HEK293 (cell line): ENCODE measurements at regions of chr17 and their contacts with region 1.

Region 1: GRCh38 chr17:40417609-40418427 is at the start of gene TOP2A:
- H3K4me3 ChIP-seq: peak within 1 kb of the TSS; percentile 96
- H3K27ac ChIP-seq: peak within 1 kb of the TSS; percentile 94
- H3K4me1 ChIP-seq: peaks cover 3% of the 10 kb centered on the region
- CTCF ChIP-seq: 0 out of 2 replicates have a peak, but pooled peaks have one; percentile 5

Region 2: DNA sequence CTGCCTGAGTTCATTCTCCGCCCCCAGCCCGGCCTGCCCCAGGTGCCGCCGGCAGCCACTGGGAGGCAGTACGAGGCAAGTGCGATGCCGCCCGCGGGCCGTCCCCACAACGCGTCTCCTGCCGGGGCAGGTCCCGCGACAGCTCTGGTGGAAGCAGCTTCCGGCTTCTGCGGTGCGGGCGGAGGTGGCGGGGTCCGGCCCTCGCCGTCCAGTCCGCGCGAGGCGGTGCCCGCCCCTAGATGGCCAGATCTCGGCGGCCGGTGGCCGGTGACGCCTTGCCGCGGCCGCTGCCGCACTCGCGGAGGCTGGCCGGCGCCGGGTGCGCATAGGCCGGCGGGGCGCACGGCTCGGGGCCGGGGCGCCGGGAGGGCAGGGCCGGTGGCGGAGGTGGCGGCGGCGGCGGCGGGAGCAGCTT is 55.1 kb before region 1 on chr17:
- CTCF ChIA-PET with region 1: interaction called, 4 read pairs
- POLR2A ChIA-PET with region 1: interaction called, 18 read pairs
- H3K4me3 ChIP-seq: peak overlapping the region; percentile 50
- H3K27ac ChIP-seq: peak overlapping the region; percentile 70; the same call in 1 of the 2 replicates
- H3K4me1 ChIP-seq: no peaks in the 10 kb centered on the region
- CTCF ChIP-seq: peak; percentile 97

Region 3: DNA sequence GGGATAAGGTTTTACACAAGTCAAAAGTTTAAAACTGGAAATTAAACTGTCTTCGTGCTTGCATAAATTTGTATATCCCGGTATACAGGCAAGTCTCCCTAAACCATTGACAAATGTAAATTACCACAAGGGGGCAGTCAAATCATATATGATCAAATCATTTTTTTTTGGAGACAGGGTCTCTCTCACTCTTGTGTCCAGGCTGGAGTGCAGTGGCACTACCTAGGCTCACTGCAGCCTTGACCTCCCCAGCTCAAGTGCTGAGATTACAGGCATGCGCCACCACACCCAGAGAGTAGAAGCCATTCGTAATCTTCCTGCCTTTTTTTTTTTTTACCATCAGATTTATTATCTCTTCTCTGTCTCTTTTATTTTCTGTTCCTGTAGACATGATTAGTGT is 18.6 kb before region 1 on chr17:
- CTCF ChIA-PET with region 1: interaction called, 13 read pairs
- POLR2A ChIA-PET with region 1: interaction called, 11 read pairs
- H3K4me3 ChIP-seq: no peak overlapping the region
- H3K27ac ChIP-seq: no peak overlapping the region
- H3K4me1 ChIP-seq: no peaks in the 10 kb centered on the region
- CTCF ChIP-seq: no peak

Region 4: GRCh38 chr17:40443583-40444327 is 25.9 kb after region 1 on chr17:
- CTCF ChIA-PET with region 1: interaction called, 7 read pairs
- POLR2A ChIA-PET with region 1: interaction called, 13 read pairs
- H3K4me3 ChIP-seq: peak overlapping the region; percentile 16
- H3K27ac ChIP-seq: peak overlapping the region; percentile 46; the same call in 1 of the 2 replicates
- H3K4me1 ChIP-seq: no peaks in the 10 kb centered on the region; the same call in 1 of the 2 replicates
- CTCF ChIP-seq: peak; percentile 76

Region 5: DNA sequence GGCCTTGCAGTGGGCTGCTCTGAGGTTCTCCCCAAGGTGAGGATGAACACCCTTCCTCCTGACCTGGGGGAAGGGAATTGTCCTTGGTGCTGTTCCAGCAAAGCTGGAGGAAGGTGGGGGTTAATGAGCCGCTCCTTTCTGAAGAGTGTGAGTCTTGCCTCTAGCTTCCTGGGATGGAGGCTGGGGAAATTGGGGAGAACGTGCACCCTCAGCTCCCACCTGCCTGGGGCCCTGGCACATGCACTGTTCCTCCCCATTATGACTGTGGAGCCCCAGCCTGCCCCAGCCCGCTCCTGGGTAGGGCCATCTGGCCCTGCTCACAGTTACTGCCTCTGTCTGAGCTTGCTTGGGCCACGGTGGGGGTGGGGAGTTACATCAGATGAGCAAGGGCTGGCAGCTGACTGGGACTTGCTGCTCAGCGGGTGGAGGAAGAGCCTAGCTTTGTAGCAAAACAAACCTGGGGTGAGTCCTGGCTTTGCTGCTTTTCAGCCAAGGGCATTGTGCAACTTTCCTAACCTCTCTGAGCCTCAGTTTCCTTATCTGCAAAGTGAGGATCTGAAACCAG is 72.6 kb after region 1 on chr17:
- CTCF ChIA-PET with region 1: interaction called, 4 read pairs
- POLR2A ChIA-PET with region 1: interaction called, 10 read pairs
- H3K4me3 ChIP-seq: no peak overlapping the region
- H3K27ac ChIP-seq: no peak overlapping the region; the same call in 1 of the 2 replicates
- H3K4me1 ChIP-seq: peaks cover 17% of the 10 kb centered on the region
- CTCF ChIP-seq: no peak